MCF 10A (cell line): ENCODE measurements at regions of chr12 and their contacts with region 1.

Region 1: DNA sequence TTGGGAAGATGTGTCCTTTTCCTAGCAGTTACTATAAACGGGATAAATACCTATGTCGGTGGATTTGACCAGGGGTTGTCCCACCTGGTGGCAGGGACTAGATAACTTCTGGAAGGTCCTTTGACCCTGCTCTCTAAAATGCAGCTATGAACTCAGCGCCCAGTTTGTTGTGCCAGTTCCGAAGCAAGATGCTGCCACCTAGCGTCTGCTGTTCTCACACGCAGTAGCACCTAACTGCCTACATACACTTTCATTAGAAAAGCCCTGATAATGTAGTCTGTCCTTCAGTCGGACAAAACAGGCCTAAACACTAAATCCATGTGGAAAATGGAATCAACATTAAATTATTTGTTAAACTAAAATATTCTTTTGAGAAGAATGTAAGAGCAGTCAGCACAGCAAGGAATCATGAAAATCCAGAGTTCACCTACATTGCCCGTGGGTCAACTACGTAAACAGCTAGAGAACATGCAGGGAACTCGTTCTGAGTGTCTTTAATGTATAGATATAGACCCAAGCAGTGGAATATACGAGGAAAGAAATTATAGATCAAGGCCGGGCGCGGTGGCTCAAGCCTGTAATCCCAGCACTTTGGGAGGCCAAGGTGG is 51.1 kb upstream of the CRACR2A start:
- DNase-seq: peak; percentile 68
- H3K4me3 Mint-ChIP-seq: no peak overlapping the region
- H3K27ac Mint-ChIP-seq: no peak overlapping the region
- H3K4me1 Mint-ChIP-seq: no peaks in the 10 kb centered on the region
- H3K27me3 Mint-ChIP-seq: no peaks in the 10 kb centered on the region
- CTCF ChIP-seq: peak; percentile 71

Region 2: GRCh38 chr12:3632256-3633240 is 171.4 kb before region 1 on chr12:
- CTCF ChIA-PET with region 1: no interaction called
- POLR2A ChIA-PET with region 1: no interaction called
- intact Hi-C with region 1: no loop called
- DNase-seq: no peak
- H3K4me3 Mint-ChIP-seq: no peak overlapping the region
- H3K27ac Mint-ChIP-seq: no peak overlapping the region
- H3K4me1 Mint-ChIP-seq: peaks cover 6% of the 10 kb centered on the region
- H3K27me3 Mint-ChIP-seq: peaks cover 11% of the 10 kb centered on the region
- CTCF ChIP-seq: no peak

Region 3: GRCh38 chr12:3789838-3790237 is 14.1 kb before region 1 on chr12:
- CTCF ChIA-PET with region 1: interaction called, 18 read pairs
- POLR2A ChIA-PET with region 1: no interaction called
- intact Hi-C with region 1: no loop called
- DNase-seq: no peak
- H3K4me3 Mint-ChIP-seq: no peak overlapping the region
- H3K27ac Mint-ChIP-seq: no peak overlapping the region
- H3K4me1 Mint-ChIP-seq: no peaks in the 10 kb centered on the region
- H3K27me3 Mint-ChIP-seq: no peaks in the 10 kb centered on the region
- CTCF ChIP-seq: no peak

Region 4: GRCh38 chr12:3820122-3820521 is 16.2 kb after region 1 on chr12:
- CTCF ChIA-PET with region 1: interaction called, 13 read pairs
- POLR2A ChIA-PET with region 1: interaction called, 4 read pairs
- intact Hi-C with region 1: no loop called
- DNase-seq: peak; percentile 20
- H3K4me3 Mint-ChIP-seq: no peak overlapping the region
- H3K27ac Mint-ChIP-seq: no peak overlapping the region
- H3K4me1 Mint-ChIP-seq: no peaks in the 10 kb centered on the region
- H3K27me3 Mint-ChIP-seq: no peaks in the 10 kb centered on the region
- CTCF ChIP-seq: no peak